PC-9 (cell line): ENCODE measurements at regions of chr1 and their contacts with region 1.

Region 1: GRCh38 chr1:11645670-11646265 is 8.5 kb downstream of the FBXO2 start:
- DNase-seq: peak; percentile 46 to 72
- H3K4me3 ChIP-seq: no peak overlapping the region
- H3K27ac ChIP-seq: no peak overlapping the region
- H3K4me1 ChIP-seq: no peaks in the 10 kb centered on the region
- H3K27me3 ChIP-seq: 0 out of 2 replicates have a peak, but pooled peaks cover 1% of the 10 kb centered on the region
- CTCF ChIP-seq: peak; percentile 74

Region 2: DNA sequence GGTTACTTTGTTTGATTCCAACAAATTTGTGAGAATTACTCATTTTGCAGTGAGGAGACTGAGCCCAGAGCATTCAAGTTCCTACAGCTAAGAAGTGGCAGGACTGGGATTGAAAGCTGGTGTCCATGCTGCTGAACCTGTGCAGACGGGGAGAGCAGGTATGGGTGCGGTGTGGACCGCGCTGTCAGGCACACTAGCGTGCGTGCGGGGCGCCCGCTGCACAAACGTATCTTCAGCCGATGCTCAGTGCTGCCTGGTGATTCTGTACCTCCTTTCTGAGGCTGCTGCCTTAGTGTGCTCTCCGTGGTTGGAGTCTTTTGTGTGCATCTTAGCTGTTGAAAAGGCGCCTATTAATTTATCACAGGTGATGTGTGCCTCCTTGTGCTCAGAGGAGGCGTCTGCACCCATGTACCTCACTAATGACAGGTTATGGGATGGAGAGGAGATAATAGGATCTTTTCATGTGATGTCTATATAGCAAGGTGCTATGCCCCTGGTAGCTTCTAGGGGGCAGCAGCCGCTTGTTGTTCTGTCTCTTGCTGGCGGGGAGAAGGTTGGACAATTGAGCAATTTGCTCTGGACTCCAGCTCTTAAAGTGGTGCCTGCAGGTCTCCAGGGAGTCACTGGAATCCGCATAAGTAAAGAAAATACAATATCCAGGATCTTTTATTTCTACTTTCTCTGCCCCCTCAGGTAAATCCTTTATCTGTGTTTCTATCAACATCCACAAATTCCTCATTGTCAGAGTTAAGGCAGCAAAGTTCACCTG is 1138.5 kb before region 1 on chr1:
- CTCF ChIA-PET with region 1: no interaction called
- POLR2A ChIA-PET with region 1: no interaction called
- intact Hi-C with region 1: loop called (anchors 5 kb)
- DNase-seq: peak; percentile 45 to 49
- H3K4me3 ChIP-seq: no peak overlapping the region
- H3K27ac ChIP-seq: no peak overlapping the region
- H3K4me1 ChIP-seq: peaks cover 28% of the 10 kb centered on the region
- H3K27me3 ChIP-seq: no peaks in the 10 kb centered on the region
- CTCF ChIP-seq: peak; percentile 79

Region 3: DNA sequence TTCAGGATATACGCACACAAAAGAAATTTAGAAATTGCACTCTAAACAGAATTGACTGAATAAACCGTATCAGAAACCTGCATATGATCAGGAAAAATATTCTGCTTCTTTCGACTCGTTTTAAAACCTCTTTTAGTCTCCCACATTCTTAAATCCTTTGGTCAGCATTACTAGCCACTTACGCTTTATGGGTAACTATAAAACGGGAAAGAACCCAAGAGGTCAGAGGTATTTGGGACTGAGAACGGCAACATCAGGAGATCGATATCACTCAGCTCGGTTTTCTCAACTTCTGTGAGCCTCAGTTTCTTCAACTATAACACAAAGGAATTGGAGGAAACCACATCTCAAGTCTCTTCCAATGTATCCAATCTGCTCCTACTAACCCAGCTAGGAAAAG is 493.0 kb before region 1 on chr1:
- CTCF ChIA-PET with region 1: interaction called, 11 read pairs
- POLR2A ChIA-PET with region 1: no interaction called
- intact Hi-C with region 1: no loop called
- DNase-seq: no peak
- H3K4me3 ChIP-seq: no peak overlapping the region
- H3K27ac ChIP-seq: no peak overlapping the region
- H3K4me1 ChIP-seq: peaks cover 7% of the 10 kb centered on the region
- H3K27me3 ChIP-seq: no peaks in the 10 kb centered on the region
- CTCF ChIP-seq: no peak

Region 4: DNA sequence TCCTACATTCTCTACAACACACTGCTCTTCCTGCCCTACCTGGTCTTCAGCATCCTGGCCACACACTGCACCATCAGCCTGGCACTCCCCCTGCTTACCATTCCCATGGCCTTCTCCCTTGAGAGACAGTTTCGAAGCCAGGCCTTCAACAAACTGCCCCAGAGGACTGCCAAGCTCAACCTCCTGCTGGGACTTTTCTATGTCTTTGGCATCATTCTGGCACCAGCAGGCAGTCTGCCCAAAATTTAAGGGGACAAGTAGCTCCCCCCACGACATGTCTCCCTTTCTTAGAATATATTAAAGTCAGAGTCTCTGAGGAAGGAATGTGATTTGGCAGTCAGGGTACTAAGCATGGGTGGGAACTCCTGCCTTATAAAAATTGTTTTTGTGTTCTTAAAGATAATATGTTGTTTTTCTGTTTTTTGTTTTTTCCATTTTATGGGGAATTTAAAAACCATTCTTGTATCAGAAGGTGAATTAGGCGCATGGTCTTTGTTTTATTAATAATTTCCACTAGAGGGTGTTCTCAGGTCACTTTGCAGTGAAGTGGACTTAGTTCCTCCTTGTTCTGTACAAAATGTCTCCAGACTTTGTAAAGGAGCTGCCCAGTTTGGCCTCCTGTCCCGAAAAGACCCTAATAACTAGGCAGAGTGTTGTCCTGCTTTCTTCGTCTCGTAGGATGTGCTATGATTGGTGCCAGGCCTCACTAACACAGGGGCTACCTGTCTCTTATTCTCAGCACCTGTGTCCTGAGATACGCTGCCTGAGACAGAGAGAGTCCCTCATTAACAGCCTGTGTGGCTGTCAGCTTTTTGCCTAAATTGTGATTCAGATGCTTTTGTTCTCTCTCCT is 359.7 kb before region 1 on chr1:
- CTCF ChIA-PET with region 1: no interaction called
- POLR2A ChIA-PET with region 1: no interaction called
- intact Hi-C with region 1: loop called (anchors 2 kb)
- DNase-seq: no peak
- H3K4me3 ChIP-seq: no peak overlapping the region
- H3K27ac ChIP-seq: no peak overlapping the region
- H3K4me1 ChIP-seq: no peaks in the 10 kb centered on the region
- H3K27me3 ChIP-seq: no peaks in the 10 kb centered on the region
- CTCF ChIP-seq: peak; percentile 47; the same call in 1 of the 2 replicates

Region 5: DNA sequence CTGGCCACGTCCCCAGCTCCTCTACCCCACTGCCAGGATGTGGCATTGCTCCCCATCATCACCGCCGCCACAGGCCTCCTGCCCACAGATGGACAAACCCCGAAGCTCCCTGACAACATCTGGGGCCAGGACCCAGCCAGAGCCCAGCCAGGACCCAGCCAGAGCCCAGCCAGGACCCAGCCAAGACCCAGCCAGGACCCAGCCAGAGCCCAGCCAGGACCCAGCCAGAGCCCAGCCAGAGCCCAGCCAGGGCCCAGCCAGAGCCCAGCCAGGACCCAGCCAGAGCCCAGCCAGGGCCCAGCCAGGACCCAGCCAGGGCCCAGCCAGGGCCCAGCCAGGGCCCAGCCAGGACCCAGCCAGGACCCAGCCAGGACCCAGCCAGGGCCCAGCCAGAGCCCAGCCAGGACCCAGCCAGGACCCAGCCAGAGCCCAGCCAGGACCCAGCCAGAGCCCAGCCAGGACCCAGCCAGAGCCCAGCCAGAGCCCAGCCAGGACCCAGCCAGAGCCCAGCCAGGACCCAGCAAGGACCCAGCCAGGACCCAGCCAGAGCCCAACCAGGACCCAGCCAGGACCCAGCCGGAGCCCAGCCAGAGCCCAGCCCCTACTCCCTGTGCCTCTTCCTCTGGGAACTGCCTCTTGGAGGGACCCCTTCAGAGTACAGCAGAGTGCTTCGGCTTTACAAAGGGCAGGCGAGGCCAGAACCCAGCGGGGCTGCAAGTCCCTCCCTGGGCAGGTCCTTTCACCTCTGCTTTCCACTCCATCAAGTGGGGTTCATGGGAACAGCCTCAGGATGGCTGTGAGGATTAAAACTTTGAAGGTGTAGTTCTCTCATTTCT is 123.2 kb before region 1 on chr1:
- CTCF ChIA-PET with region 1: no interaction called
- POLR2A ChIA-PET with region 1: no interaction called
- intact Hi-C with region 1: no loop called
- DNase-seq: no peak
- H3K4me3 ChIP-seq: no peak overlapping the region
- H3K27ac ChIP-seq: no peak overlapping the region
- H3K4me1 ChIP-seq: no peaks in the 10 kb centered on the region
- H3K27me3 ChIP-seq: peaks cover 43% of the 10 kb centered on the region
- CTCF ChIP-seq: no peak